AG04449 (cell line): ENCODE measurements at regions of chr17 and their contacts with region 1.

Region 1: DNA sequence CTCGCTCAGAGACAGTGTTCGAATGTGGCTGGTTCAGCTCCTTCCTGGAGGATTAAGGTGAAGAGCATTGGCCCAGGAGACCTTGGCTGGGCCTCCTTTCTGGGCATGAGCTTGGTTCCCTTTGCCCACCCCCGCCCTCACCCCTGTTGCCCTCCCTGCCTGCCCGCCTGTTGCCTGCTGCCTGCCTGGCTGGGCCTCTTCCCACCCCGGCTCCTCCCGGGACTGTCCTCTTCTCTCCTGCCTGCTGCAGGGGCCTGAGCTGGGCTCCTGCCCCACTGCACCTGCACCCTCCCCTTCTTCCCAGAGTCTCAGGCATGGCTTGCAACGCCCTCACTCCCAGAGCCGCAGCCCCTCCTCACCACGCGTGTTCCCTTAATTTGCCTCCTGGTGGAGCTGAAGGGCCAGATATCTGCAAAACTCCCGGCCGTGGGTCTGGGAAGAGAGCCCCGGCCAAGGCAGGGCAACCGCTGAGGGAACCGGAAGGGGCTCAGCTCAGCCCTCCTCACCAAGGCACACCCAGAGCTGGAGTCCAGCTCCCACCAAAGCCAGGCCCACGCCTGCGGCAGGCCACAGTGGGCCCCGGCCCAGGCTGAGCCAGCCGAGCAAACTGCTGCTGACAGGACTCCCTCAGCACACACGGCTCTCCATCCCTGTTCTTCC is 31.2 kb downstream of the MNT start:
- DNase-seq: no peak
- H3K4me3 ChIP-seq: no peak overlapping the region
- CTCF ChIP-seq: no peak

Region 2: DNA sequence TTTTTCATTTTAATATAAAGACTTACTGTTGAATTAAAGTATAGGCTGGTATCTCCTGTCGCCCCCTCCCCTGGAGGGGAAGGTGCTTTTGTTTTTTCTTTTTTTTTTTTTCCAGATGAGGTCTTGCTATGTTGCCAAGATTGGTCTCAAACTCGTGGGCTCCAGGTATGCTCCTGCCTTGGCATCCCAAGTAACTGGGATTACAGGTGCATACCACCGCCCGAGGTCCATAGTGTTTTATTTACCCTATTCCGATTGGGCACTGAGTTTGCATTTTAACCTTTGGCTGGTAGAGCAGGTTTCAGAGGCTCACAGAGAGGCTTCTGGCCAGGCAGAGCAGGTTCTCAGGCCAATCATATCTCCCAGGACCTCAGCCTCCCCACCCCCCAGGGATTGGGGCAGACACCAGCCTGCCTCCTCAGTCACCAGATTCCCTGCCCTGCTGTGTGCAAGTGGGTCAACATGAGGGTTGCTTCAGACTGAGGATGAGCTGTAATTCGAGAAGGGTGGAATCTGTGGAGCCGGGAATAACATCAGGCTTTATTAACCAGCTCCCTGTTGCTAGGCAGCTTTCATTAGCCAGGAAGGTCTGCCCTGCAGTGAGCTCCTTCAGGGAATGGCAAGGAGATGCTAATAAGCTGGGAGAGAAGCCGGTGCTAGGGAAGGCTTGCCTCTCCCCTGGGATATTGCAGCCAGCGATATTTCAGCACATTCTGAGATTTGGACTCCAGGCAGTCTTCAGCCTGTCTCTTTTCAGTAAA is 22.0 kb before region 1 on chr17:
- CTCF ChIA-PET with region 1: interaction called, 80 read pairs
- POLR2A ChIA-PET with region 1: no interaction called
- DNase-seq: peak; percentile 78
- H3K4me3 ChIP-seq: no peak overlapping the region
- CTCF ChIP-seq: no peak

Region 3: DNA sequence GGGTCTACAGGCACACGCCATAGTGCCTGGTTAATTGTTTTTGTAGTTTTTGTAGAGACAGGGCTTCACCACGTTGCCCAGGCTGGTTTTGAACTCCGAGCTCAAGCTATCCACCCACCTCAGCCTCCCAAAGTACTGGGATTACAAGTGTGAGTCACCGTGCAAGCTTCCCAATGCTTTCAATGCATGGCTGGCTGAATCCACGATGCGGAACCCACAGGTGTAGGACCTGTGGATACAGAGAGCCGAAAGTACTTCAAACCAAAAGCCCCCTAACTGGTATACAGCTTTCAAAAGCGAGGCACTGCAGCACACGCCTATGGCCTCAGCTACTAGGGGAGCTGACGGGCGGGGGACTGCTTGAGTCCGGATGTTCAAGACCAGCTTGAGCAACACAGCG is 97.3 kb after region 1 on chr17:
- CTCF ChIA-PET with region 1: no interaction called
- POLR2A ChIA-PET with region 1: no interaction called
- DNase-seq: no peak
- H3K4me3 ChIP-seq: no peak overlapping the region
- CTCF ChIP-seq: no peak